GM10248 (cell line): ENCODE measurements at regions of chr1 and their contacts with region 1.

Region 1: GRCh38 chr1:192477630-192478029 is 97.9 kb upstream of the RGS1 start:
- DNase-seq: peak; percentile 31
- CTCF ChIP-seq: peak; percentile 61

Region 2: GRCh38 chr1:192327997-192328396 is 149.6 kb before region 1 on chr1:
- CTCF ChIA-PET with region 1: no interaction called
- POLR2A ChIA-PET with region 1: no interaction called
- DNase-seq: no peak
- CTCF ChIP-seq: no peak

Region 3: DNA sequence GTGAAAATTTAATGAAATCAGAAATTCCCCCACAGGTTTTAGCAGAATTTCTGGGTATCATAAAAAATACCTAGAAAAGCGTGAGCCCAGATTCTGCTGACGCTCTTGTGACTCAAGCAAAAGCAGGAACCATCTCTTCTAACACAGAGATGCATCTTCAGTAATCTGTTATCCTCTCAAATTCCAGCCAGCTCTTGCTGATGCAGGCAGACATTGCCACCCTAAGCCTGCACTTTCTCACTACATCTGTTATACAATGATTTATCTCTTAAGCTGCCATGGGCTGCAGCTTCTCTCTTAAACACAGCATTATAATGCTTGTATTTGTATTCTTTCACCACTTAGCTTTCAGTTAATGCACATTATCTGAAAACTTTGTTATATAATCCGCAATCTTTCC is 15.0 kb before region 1 on chr1:
- CTCF ChIA-PET with region 1: interaction called, 10 read pairs
- POLR2A ChIA-PET with region 1: no interaction called
- DNase-seq: no peak
- CTCF ChIP-seq: no peak

Region 4: GRCh38 chr1:192580351-192580962 is 102.8 kb after region 1 on chr1:
- CTCF ChIA-PET with region 1: interaction called, 13 read pairs
- POLR2A ChIA-PET with region 1: interaction called, 3 read pairs
- DNase-seq: no peak
- CTCF ChIP-seq: peak; percentile 65

Region 5: GRCh38 chr1:192609110-192610079 is 131.8 kb after region 1 on chr1:
- CTCF ChIA-PET with region 1: interaction called, 100 read pairs
- POLR2A ChIA-PET with region 1: no interaction called
- DNase-seq: peak; percentile 73
- CTCF ChIP-seq: peak; percentile 13

Region 6: GRCh38 chr1:192747942-192748341 is 270.3 kb after region 1 on chr1:
- CTCF ChIA-PET with region 1: no interaction called
- POLR2A ChIA-PET with region 1: no interaction called
- DNase-seq: no peak
- CTCF ChIP-seq: no peak

Region 7: GRCh38 chr1:193019442-193020026 is 541.9 kb after region 1 on chr1:
- CTCF ChIA-PET with region 1: interaction called, 13 read pairs
- POLR2A ChIA-PET with region 1: no interaction called
- DNase-seq: peak; percentile 11
- CTCF ChIP-seq: peak; percentile 32